Activated T-helper 2 cell treated with anti-CD3 and anti-CD28 coated beads, Interferon-gamma antibody, Interleukin-2, Interleukin-4, amounts not matched to agents 10 μg/mL and 5 μg/mL and 100 μg/mL, durations not matched to agents 14 hours and 24 hours and 36 hours (primary cell): ENCODE measurements at regions of chr15 and their contacts with region 1.

Region 1: GRCh38 chr15:81265944-81266775 is 57.8 kb downstream of the STARD5 start:
- DNase-seq: peak; percentile 75
- H3K4me3 Mint-ChIP-seq: peak overlapping the region; percentile 57
- H3K27ac Mint-ChIP-seq: peak overlapping the region; percentile 77
- H3K4me1 Mint-ChIP-seq: peaks cover 25% of the 10 kb centered on the region
- H3K27me3 Mint-ChIP-seq: peaks cover 10% of the 10 kb centered on the region

Region 2: GRCh38 chr15:80455668-80456442 is 810.3 kb before region 1 on chr15:
- intact Hi-C with region 1: loop called (anchors 2 kb)
- DNase-seq: peak; percentile 41
- H3K4me3 Mint-ChIP-seq: no peak overlapping the region
- H3K27ac Mint-ChIP-seq: no peak overlapping the region
- H3K4me1 Mint-ChIP-seq: peaks cover 6% of the 10 kb centered on the region
- H3K27me3 Mint-ChIP-seq: peaks cover 15% of the 10 kb centered on the region

Region 3: DNA sequence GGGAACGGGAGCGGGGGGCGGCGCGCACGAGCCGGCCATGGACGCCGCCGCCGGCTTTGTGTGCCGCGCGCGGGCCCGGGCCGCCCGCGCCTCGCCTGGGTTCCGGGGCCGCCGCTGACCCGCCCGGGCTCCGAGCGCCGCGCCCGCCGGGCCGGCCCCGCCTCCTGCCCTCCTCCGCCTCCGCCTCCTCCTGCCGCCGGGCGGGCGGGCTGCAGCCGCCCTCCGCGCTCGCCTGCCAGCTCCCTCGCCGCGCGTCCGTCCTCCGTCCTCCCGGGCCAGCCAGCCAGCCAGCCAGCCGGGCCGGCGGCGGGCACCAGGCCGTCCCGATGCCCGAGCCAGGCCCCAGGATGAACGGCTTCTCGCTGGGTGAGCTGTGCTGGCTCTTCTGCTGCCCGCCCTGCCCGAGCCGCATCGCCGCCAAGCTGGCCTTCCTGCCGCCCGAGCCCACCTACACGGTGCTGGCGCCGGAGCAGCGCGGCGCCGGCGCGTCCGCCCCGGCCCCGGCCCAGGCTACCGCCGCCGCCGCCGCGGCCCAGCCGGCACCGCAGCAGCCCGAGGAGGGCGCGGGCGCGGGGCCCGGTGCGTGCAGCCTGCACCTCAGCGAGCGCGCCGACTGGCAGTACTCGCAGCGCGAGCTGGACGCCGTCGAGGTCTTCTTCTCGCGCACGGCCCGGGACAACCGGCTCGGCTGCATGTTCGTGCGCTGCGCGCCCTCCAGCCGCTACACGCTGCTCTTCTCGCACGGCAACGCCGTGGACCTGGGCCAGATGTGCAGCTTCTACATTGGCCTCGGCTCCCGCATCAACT is 570.9 kb before region 1 on chr15 and contains the start of gene ABHD17C:
- intact Hi-C with region 1: loop called (anchors 10 kb)
- DNase-seq: peak; percentile 32
- H3K4me3 Mint-ChIP-seq: peak within 1 kb of the TSS; percentile 86
- H3K27ac Mint-ChIP-seq: peak within 1 kb of the TSS; percentile 43
- H3K4me1 Mint-ChIP-seq: peaks cover 16% of the 10 kb centered on the region
- H3K27me3 Mint-ChIP-seq: peaks cover 51% of the 10 kb centered on the region
- total RNA-seq, gene ABHD17C: 4.2 and 4.3 TPM in 2 replicates

Region 4: DNA sequence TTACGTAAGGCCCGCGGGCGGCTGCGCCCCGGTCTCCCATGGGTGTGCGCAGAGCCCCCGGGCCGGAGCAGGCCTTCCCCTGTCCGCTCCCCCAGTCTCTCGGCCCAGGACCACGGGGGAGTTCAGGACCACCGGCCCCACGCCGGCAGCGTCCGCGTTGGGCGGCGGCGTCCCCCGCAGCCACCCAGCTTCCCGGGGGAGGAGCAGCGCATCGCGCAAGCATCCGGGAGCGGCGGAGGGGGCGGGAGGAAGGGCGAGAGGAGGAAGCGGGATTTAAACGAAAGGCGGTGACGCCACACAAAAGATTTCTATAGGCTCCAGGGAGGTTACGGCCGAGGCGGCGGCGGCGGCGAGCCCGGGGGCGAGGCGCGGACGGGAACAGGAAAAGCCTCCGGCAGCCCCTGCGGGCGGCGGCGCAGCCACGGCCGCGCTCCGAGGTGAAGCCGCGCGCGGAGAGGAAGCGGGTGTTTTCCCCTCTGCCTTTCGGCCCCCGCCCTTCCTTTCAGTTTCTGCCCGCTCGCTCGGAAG is 265.5 kb before region 1 on chr15 and contains the start of gene TLNRD1:
- intact Hi-C with region 1: loop called (anchors 1 kb)
- DNase-seq: peak; percentile 89
- H3K4me3 Mint-ChIP-seq: peak within 1 kb of the TSS; percentile 93
- H3K27ac Mint-ChIP-seq: peak within 1 kb of the TSS; percentile 95
- H3K4me1 Mint-ChIP-seq: peaks cover 45% of the 10 kb centered on the region
- H3K27me3 Mint-ChIP-seq: no peaks in the 10 kb centered on the region
- total RNA-seq, gene TLNRD1: 18.5 and 19.1 TPM in 2 replicates

Region 5: GRCh38 chr15:81106560-81106959 is 159.6 kb before region 1 on chr15:
- intact Hi-C with region 1: loop called (anchors 1 kb)
- DNase-seq: peak; percentile 30
- H3K4me3 Mint-ChIP-seq: no peak overlapping the region
- H3K27ac Mint-ChIP-seq: no peak overlapping the region
- H3K4me1 Mint-ChIP-seq: peaks cover 10% of the 10 kb centered on the region
- H3K27me3 Mint-ChIP-seq: peaks cover 63% of the 10 kb centered on the region

Region 6: DNA sequence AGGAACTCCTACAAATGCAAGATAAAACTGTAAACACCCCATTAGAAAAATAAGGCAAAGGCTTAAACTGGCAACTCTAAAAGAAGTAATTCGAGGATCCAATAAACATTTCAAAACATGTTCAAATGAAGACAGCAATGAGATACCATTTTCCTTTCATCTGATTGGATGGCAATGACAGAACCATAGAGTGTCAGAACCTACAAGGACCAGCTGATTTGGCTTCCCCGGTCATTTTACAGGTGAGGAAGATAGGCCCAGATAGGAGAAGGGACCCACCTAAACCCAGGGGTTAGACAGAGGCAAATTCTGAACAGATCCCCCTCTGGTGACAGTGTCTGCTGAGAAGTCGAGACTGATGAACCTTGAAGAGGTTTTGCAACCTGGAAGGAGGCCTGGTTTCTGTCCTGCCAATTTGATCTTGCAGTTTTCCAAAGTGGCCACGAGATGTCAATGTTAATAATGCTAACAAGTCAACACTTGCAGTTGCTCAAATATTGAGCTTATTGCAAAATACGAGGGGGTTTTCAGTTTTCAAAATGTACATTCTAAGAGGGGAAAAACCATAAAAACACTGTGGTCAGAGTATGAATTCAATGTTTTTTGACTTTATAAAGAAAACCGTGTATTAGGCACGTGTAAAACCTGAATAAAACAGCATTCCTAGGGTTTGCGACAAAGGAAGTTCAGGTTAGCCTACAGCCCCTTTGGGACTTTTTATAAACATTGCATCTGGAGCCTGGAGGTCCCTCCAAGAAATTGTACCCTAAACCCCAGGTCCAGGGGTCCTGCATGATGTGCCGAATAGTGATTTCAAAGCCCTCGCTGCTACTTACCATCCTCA is 110.6 kb before region 1 on chr15:
- intact Hi-C with region 1: loop called (anchors 1 kb)
- DNase-seq: no peak
- H3K4me3 Mint-ChIP-seq: no peak overlapping the region
- H3K27ac Mint-ChIP-seq: no peak overlapping the region
- H3K4me1 Mint-ChIP-seq: peaks cover 3% of the 10 kb centered on the region
- H3K27me3 Mint-ChIP-seq: peaks cover 7% of the 10 kb centered on the region

Region 7: GRCh38 chr15:81400640-81401236 is 134.6 kb after region 1 on chr15:
- intact Hi-C with region 1: loop called (anchors 2 kb)
- DNase-seq: no peak
- H3K4me3 Mint-ChIP-seq: no peak overlapping the region
- H3K27ac Mint-ChIP-seq: no peak overlapping the region
- H3K4me1 Mint-ChIP-seq: peaks cover 2% of the 10 kb centered on the region
- H3K27me3 Mint-ChIP-seq: peaks cover 12% of the 10 kb centered on the region